Left cardiac atrium (tissue), 4 donors: ENCODE measurements at regions of chr4 and their contacts with region 1.

Region 1: GRCh38 chr4:150209140-150209829 is 131.0 kb downstream of the DCLK2 start:
- DNase-seq: peak; percentile 71
- ATAC-seq: peak; percentile 73 to 83

Region 2: GRCh38 chr4:150010525-150011126 is 198.7 kb before region 1 on chr4:
- intact Hi-C with region 1: loop called (anchors 2 to 5 kb)
- DNase-seq: peak; percentile 25
- ATAC-seq: peak; percentile 84 to 85

Region 3: DNA sequence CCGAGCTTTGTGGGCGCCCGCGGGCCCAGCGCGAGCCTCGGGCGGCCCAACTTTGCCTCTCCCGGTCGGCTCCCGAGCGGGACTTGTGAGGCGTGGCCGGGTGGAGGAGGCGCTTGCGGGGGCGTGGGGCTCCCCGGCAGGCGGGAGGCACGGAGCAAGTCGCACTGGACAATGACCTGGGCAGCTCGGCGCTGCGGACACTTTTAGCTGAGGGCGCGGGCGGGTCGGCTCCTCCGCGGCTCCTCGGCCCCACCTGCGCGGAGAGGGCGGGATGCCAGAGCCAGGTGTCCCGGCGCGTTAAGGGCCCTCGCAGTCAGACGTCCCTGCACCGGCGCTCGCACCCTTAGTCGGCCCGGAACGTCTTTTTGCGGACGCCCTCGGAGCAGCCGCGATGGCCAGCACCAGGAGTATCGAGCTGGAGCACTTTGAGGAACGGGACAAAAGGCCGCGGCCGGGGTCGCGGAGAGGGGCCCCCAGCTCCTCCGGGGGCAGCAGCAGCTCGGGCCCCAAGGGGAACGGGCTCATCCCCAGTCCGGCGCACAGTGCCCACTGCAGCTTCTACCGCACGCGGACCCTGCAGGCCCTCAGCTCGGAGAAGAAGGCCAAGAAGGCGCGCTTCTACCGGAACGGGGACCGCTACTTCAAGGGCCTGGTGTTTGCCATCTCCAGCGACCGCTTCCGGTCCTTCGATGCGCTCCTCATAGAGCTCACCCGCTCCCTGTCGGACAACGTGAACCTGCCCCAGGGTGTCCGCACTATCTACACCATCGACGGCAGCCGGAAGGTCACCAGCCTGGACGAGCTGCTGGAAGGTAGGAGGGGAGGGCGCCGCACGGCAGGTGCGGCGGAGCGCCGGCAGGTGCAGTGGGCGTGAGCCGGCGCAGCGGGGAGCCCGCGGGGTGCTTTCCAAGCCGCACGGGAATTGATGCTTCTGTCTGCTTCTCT is 130.4 kb before region 1 on chr4:
- intact Hi-C with region 1: loop called in 1 of 2 experiments (anchors 5 kb)
- DNase-seq: peak; percentile 74
- ATAC-seq: peak; percentile 71 to 77